ENCODE measurements at regions of chr2 and their contacts with region 1.

Region 1: GRCh38 chr2:85813982-85814801 is 60.4 kb downstream of the ATOH8 start:
- DNase-seq: peak; percentile 89
- CTCF ChIP-seq: peak; percentile 92

Region 2: GRCh38 chr2:85635636-85636035 is 178.6 kb before region 1 on chr2:
- CTCF ChIA-PET with region 1: interaction called, 43 read pairs
- POLR2A ChIA-PET with region 1: no interaction called
- DNase-seq: no peak
- CTCF ChIP-seq: no peak

Region 3: DNA sequence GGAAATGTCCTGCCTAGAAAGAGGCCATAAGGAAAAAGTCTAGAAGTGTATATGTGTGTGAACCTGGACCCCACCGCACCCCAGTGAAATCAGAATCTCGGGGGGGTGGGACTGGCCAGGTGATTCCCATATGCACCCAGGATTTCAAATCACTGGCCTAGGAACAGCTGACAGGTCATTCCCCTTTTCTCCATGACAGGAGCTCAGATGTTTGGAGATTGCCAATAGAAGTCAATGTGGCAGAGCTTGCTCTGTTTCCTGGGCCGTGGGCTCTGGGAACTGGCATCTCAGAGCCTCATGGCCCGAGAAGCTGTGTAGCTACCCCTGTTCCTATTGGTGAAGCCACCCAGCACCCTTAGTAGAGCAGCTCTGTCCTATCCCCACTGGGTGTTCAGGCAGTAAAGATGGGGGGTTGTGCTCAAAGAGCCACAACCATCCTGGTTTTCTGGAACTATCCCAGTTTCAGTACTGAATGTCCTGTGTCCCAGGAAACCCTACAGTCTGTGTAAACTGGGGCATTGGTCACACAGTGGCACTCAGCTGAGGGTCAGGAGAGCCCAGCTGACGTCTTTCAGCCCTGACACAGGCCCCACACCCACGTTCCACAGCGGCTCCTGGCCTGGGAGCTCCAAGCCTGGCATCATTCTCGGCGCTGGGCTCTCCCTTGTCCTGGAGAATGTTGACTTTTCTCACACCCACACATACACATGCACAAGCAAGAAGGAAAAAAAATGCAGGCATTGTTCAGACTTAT is 101.2 kb before region 1 on chr2:
- CTCF ChIA-PET with region 1: interaction called, 20 read pairs
- POLR2A ChIA-PET with region 1: no interaction called
- DNase-seq: no peak
- CTCF ChIP-seq: no peak

Region 4: DNA sequence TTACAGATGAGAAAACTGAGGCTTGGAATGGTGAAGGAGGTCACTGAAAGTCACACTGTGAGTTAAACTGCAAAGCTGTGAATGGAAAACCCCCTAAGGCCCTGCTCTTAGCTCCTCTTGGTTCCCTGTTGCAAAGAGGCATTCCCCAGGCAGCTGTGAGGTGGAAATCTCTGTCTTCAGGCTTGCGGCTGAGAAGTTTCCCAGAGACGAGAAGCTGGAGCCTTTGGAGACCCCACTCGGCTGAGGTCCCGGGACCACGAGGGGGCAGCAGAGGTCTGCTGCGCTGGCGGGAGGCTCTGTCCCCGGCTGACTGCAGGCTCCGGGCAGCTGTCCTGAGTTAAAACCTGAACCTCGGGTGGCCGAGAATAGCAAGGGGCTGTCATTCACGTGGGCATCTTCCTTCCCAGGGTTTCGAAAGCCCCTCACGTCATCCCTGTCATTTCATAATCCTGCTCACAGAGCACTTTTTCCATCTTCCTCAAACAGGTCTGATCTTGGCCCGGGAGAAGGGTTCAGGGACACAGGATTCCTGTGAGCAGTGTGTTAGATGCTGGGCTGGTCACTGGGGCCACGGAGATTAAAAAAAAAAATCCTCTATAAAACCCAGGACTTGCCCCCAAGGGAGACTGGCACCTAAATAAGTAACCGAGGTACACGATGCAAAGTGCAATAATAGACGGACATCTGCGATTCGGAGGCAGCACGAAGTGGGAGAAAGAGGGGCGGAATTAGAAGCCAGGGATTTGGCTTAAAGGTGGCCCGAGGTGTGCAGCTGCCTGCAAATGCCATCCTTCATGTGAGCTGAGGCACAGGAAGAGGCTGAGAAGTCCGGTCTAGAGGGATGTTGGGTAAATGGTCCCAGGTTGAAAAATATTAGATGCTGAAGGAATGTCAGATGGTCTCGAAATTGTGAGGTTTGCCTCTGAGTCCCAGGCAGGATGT is 85.0 kb before region 1 on chr2:
- CTCF ChIA-PET with region 1: interaction called, 140 read pairs
- POLR2A ChIA-PET with region 1: no interaction called
- DNase-seq: peak; percentile 89
- CTCF ChIP-seq: peak; percentile 96

Region 5: DNA sequence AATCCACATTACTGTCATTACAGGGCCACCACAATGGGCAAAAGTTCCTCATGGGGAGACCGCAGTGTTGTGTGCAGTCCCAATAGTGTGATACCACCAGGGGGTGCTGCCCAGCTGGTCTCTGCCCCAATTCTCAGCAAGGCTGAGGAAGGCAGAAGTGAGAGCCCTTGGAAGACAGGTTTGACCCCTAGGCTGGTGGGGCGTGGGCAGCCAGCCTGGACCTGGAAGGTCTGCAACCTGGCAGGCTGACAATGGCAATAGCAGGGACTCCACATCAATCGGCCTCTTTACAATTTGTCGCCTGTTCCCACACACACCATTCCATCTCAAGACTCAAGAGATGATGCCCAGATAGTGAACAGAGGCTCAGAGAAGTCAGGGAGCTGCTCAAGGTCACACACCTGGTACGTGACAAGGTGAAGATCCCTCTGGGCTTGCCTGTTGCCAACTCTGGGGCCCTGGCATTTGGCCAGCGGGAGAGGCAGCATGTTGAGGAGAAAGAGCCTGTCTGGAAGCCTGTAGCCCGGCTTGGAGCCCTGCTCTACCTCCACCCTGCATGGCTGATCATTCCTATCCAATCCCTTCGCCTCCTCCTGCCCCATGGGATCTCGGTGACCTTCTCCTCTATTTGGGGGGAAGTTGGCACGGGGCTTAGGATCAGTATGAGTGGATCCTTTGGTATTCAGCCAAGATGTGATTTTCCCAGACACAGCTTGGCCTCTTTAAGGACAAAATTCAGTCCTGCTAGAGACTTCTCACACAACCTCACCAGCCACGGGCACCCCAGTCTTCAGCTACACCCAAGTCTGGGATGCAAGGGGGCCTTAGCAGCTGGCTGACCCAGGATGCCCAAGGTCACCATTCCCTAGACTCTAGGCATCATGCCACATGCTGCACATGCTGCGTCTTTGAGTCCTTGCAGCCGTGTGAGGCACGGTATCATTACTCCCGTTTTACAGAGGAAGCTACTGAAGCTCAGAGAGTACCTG is 63.3 kb before region 1 on chr2:
- CTCF ChIA-PET with region 1: interaction called, 20 read pairs
- POLR2A ChIA-PET with region 1: no interaction called
- DNase-seq: peak; percentile 57
- CTCF ChIP-seq: peak; percentile 35

Region 6: GRCh38 chr2:86556198-86556899 is 742.2 kb after region 1 on chr2:
- CTCF ChIA-PET with region 1: no interaction called
- POLR2A ChIA-PET with region 1: no interaction called
- DNase-seq: no peak
- CTCF ChIP-seq: no peak

Measured in GM10248 (cell line).